SK-N-SH (cell line): ENCODE measurements at regions of chr15 and their contacts with region 1.

Region 1: DNA sequence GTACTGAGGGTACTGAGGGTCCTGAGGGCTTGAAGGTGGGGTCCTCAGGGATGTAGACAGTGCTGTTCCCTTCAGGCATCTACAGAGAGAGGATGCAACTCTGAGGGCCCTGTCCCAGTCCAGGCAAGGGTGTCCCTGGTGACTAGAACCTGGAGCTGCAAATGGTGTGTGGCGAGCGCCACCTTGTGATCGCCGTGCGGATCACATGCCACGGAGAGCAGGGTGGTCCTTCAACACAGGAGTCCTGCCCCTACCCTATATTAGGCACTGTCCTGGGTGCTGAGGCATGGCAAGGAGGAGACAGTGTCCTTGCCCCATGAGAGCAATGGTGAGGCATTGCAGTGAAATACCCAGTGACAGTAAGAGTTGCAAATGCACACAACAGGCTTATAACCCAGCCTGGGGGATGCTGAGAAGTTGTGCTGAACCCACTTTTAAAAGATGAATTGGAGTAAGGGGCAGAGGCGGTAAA is 23.6 kb downstream of the RHCG start:
- DNase-seq: peak; percentile 91
- H3K4me3 ChIP-seq: no peak overlapping the region; a peak in 1 of 4 replicates
- H3K27ac ChIP-seq: no peak overlapping the region
- H3K4me1 ChIP-seq: peaks cover 2 to 5% of the 10 kb centered on the region in 2 experiments; a peak in 2 of 4 replicates
- H3K27me3 ChIP-seq: no peaks in the 10 kb centered on the region
- CTCF ChIP-seq: peak; percentile 85
- EP300 ChIP-seq: no peak
- RAD21 ChIP-seq: peak; percentile 96

Region 2: DNA sequence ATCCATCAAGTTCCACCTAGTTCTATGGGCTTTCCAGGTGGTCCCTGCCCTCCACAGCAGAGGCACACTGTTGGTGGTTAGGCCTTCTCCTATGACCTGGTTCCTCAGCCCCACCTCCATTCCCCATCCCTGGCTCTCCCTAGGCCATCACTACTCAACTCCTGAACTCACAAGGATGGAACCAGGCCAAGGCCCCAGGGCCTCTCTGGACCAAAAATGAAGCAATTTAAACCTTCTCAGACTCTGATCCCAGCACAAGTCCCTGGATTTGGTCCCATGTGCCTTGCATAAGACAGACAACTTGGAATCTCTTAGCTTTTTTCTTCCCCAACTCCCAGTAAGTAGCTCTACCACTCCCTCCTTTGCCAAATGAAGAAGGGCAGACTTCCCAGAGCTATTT is 684.0 kb before region 1 on chr15:
- CTCF ChIA-PET with region 1: no interaction called
- POLR2A ChIA-PET with region 1: no interaction called
- DNase-seq: no peak
- H3K4me3 ChIP-seq: no peak overlapping the region
- H3K27ac ChIP-seq: no peak overlapping the region
- H3K4me1 ChIP-seq: no peaks in the 10 kb centered on the region
- H3K27me3 ChIP-seq: no peaks in the 10 kb centered on the region
- CTCF ChIP-seq: no peak
- EP300 ChIP-seq: no peak
- RAD21 ChIP-seq: no peak

Region 3: GRCh38 chr15:89416141-89416853 is 56.5 kb before region 1 on chr15:
- CTCF ChIA-PET with region 1: interaction called, 33 read pairs
- POLR2A ChIA-PET with region 1: no interaction called
- DNase-seq: peak; percentile 96
- H3K4me3 ChIP-seq: peak overlapping the region in 1 of 2 experiments; percentile 60; a peak in 1 of 4 replicates
- H3K27ac ChIP-seq: no peak overlapping the region
- H3K4me1 ChIP-seq: no peaks in the 10 kb centered on the region; a peak in 1 of 4 replicates
- H3K27me3 ChIP-seq: no peaks in the 10 kb centered on the region
- CTCF ChIP-seq: peak; percentile 90
- EP300 ChIP-seq: no peak
- RAD21 ChIP-seq: peak; percentile 57

Region 4: DNA sequence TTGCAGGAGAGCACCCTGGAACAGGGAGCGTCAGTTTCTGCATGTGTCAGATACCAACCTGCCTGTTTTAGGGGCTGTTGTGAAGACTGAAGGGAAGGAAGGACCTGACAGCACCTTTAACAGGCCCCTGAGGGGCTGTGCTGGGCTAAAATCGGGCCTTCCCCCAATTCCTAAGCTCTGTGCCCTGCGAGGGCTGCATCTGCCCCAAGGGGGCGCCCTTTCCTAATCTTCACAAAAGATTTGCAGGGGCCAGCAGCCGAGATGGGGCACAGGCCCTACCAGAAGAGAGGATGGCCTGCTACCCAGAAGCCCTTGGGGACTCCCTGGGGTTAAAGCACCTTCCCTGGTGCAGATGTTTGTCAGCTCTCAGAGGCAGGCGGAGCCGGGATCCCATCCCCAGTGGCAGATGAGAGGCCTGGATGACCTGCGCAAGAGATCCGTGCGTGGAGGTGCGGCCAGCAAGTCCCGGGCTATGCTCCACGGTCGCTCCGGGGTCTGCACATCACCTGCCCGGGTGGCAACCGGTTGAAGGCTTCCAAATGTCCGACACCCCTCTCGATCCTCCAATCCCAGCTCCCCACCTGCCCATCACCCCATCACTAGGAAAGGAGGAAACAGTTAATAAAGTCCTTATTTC is 30.0 kb before region 1 on chr15:
- CTCF ChIA-PET with region 1: interaction called, 309 read pairs
- POLR2A ChIA-PET with region 1: no interaction called
- DNase-seq: peak; percentile 88
- H3K4me3 ChIP-seq: peak overlapping the region in 1 of 2 experiments; percentile 17; a peak in 1 of 4 replicates
- H3K27ac ChIP-seq: no peak overlapping the region
- H3K4me1 ChIP-seq: peaks cover 0 to 43% of the 10 kb centered on the region in 2 experiments; a peak in 1 of 4 replicates
- H3K27me3 ChIP-seq: no peaks in the 10 kb centered on the region
- CTCF ChIP-seq: peak; percentile 84
- EP300 ChIP-seq: no peak
- RAD21 ChIP-seq: peak; percentile 82

Region 5: GRCh38 chr15:89485855-89486361 is 13.1 kb after region 1 on chr15:
- CTCF ChIA-PET with region 1: interaction called, 12 read pairs
- POLR2A ChIA-PET with region 1: no interaction called
- DNase-seq: no peak
- H3K4me3 ChIP-seq: no peak overlapping the region
- H3K27ac ChIP-seq: no peak overlapping the region
- H3K4me1 ChIP-seq: peaks cover 0 to 2% of the 10 kb centered on the region in 2 experiments; a peak in 1 of 4 replicates
- H3K27me3 ChIP-seq: no peaks in the 10 kb centered on the region
- CTCF ChIP-seq: no peak
- EP300 ChIP-seq: no peak
- RAD21 ChIP-seq: no peak

Region 6: DNA sequence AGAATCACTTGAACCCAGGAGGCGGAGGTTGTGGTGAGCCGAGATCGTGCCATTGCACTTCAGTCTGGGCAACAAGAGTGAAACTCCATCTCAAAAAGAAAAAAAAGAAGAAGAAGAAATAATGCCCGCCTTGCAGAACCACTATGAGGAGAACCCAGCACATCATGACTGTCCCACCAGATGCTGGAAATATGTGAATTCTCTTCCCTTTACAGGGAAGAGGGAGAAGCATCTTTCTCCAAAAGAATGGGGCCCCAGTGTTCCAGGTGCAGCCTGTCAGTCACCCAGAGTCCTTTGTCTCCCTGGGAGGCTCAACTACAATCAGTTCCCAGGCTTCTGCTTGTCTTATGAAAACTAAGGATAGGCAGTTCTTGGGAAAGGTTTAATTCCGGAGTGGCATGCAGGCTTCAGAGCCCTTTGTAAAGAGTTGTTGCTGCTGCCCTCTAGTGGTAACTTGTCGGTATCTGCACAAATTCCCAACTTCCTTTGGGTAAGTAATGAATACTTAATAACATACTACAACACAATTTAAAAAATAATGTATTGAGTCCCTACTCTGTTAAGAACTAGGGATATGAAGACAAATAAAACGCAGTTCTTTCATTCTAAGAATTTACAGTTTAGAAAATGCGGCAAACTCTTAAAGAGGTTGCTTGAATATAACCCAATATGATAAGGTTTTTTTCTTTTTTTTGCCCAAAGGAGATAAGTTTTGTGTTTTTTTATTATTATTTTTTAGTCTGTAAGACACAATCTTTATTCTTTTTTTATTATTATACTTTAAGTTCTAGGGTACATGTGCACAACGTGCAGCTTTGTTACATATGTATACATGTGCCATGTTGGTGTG is 83.8 kb after region 1 on chr15:
- CTCF ChIA-PET with region 1: interaction called, 11 read pairs
- POLR2A ChIA-PET with region 1: no interaction called
- DNase-seq: peak; percentile 70
- H3K4me3 ChIP-seq: no peak overlapping the region
- H3K27ac ChIP-seq: no peak overlapping the region
- H3K4me1 ChIP-seq: no peaks in the 10 kb centered on the region
- H3K27me3 ChIP-seq: peaks cover 10% of the 10 kb centered on the region; the same call in 1 of the 2 replicates
- CTCF ChIP-seq: peak; percentile 85
- EP300 ChIP-seq: no peak
- RAD21 ChIP-seq: peak; percentile 74